ENCODE measurements at regions of chr13 and their contacts with region 1.

Region 1: GRCh38 chr13:23243066-23243465 is 62.3 kb downstream of the SGCG start:
- DNase-seq: no peak

Region 2: DNA sequence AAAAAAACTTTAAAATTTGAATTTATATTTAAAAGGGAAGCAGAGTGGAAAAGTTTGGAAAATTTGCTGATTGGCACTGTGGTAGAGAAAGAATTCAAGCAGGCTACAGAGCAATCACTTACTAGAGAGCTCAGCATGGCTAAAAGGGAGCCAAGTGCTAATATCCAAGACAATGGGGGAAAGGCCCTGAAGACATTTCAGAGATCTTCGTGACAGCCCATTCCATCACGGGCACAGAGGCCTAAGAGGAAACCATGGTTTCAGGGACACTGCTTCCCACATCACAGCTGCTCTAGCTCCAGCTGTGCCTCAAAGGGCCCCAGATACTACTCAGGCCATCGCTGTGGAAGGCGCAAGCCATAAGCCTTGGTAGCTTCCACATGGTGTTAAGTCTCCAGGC is 11.4 kb after region 1 on chr13:
- intact Hi-C with region 1: loop called in 1 of 2 experiments (anchors 1 kb)
- DNase-seq: no peak

Region 3: GRCh38 chr13:23547000-23547590 is 304.0 kb after region 1 on chr13:
- intact Hi-C with region 1: no loop called
- DNase-seq: peak; percentile 86

Measured in posterior vena cava (tissue), 2 donors.